ENCODE measurements at regions of chr10 and their contacts with region 1.

Region 1: GRCh38 chr10:62038609-62039190 is 137.2 kb downstream of the ARID5B start:
- DNase-seq: peak; percentile 78
- ATAC-seq: peak; percentile 33
- H3K4me3 ChIP-seq: no peak overlapping the region; the same call in 1 of the 2 replicates
- H3K27ac ChIP-seq: peak overlapping the region; percentile 96
- H3K4me1 ChIP-seq: peaks cover 28% of the 10 kb centered on the region
- H3K27me3 ChIP-seq: no peaks in the 10 kb centered on the region
- CTCF ChIP-seq: peak; percentile 84
- POLR2A ChIP-seq: 0 out of 2 replicates have a peak, but pooled peaks have one; percentile 23
- RAD21 ChIP-seq: peak; percentile 90

Region 2: GRCh38 chr10:62816331-62817120 is 777.8 kb after region 1 on chr10 and contains the start of gene EGR2:
- CTCF ChIA-PET with region 1: no interaction called
- POLR2A ChIA-PET with region 1: no interaction called
- dilution Hi-C with region 1: no loop called
- in situ Hi-C with region 1: loop called (anchors 25 kb)
- intact Hi-C with region 1: no loop called
- DNase-seq: peak; percentile 94
- ATAC-seq: peak; percentile 91
- H3K4me3 ChIP-seq: peak within 1 kb of the TSS; percentile 73
- H3K27ac ChIP-seq: peak within 1 kb of the TSS; percentile 53
- H3K4me1 ChIP-seq: peaks cover 7% of the 10 kb centered on the region; the same call in 1 of the 2 replicates
- H3K27me3 ChIP-seq: peaks cover 48% of the 10 kb centered on the region
- CTCF ChIP-seq: no peak
- POLR2A ChIP-seq: peak; percentile 50
- RAD21 ChIP-seq: no peak
- total RNA-seq, gene EGR2: 0.36 and 0.56 TPM in 2 replicates

Measured in IMR-90 (cell line).